ENCODE measurements at regions of chr7 and their contacts with region 1.

Region 1: GRCh38 chr7:120941064-120941463 is 9.5 kb upstream of the ING3 start:
- DNase-seq: no peak
- ATAC-seq: peak in 3 of 4 donors; percentile 68 to 75 (median 69)
- H3K4me3 ChIP-seq: no peak overlapping the region
- H3K27ac ChIP-seq: no peak overlapping the region
- H3K4me1 ChIP-seq: peaks cover 0 to 3% (median 3%) of the 10 kb centered on the region in 3 donors
- H3K27me3 ChIP-seq: no peaks in the 10 kb centered on the region
- CTCF ChIP-seq: peak in 2 of 4 donors; percentile 10 to 11

Region 2: GRCh38 chr7:120521762-120522737 is 419.0 kb before region 1 on chr7:
- intact Hi-C with region 1: no loop called
- DNase-seq: no peak
- ATAC-seq: no peak
- H3K4me3 ChIP-seq: no peak overlapping the region
- H3K27ac ChIP-seq: no peak overlapping the region
- H3K4me1 ChIP-seq: no peaks in the 10 kb centered on the region
- H3K27me3 ChIP-seq: no peaks in the 10 kb centered on the region
- CTCF ChIP-seq: no peak

Region 3: GRCh38 chr7:120792091-120792860 is 148.8 kb before region 1 on chr7:
- intact Hi-C with region 1: loop called in 1 of 3 experiments (anchors 10 kb)
- DNase-seq: peak; percentile 61 to 90 (median 79)
- ATAC-seq: peak; percentile 89 to 99 (median 97)
- H3K4me3 ChIP-seq: no peak overlapping the region
- H3K27ac ChIP-seq: no peak overlapping the region
- H3K4me1 ChIP-seq: peaks cover 0 to 6% (median 0%) of the 10 kb centered on the region in 3 donors
- H3K27me3 ChIP-seq: no peaks in the 10 kb centered on the region
- CTCF ChIP-seq: peak; percentile 64 to 83 (median 75)

Region 4: GRCh38 chr7:120799813-120800475 is 141.1 kb before region 1 on chr7:
- intact Hi-C with region 1: loop called in 2 of 3 experiments (anchors 5 to 10 kb)
- DNase-seq: no peak
- ATAC-seq: no peak
- H3K4me3 ChIP-seq: no peak overlapping the region
- H3K27ac ChIP-seq: no peak overlapping the region
- H3K4me1 ChIP-seq: peaks cover 0 to 5% (median 0%) of the 10 kb centered on the region in 3 donors
- H3K27me3 ChIP-seq: no peaks in the 10 kb centered on the region
- CTCF ChIP-seq: no peak

Region 5: DNA sequence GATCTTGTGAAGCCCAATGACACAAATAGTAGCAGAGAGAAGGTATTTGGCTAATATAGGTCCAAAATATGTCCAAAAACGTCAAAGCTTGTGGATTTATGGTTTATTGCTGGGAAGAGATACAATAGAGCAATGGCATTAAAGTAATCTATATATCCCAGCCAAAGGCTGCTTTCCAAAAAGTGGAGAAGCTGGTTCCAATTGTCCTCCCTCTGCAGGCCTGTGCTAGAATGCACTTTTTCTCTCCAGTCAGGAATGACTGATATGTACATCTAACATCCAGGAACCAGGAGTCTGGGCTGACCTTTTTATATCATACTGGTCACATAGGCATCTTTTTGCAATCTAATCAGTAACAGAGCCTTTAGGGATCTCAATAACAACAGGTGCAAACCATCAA is 622.1 kb after region 1 on chr7:
- intact Hi-C with region 1: no loop called
- DNase-seq: no peak
- ATAC-seq: no peak
- H3K4me3 ChIP-seq: no peak overlapping the region
- H3K27ac ChIP-seq: no peak overlapping the region
- H3K4me1 ChIP-seq: no peaks in the 10 kb centered on the region
- H3K27me3 ChIP-seq: no peaks in the 10 kb centered on the region
- CTCF ChIP-seq: no peak

Measured in pancreas (tissue), 10 donors.